T-cell (primary cell): ENCODE measurements at regions of chr2 and their contacts with region 1.

Region 1: DNA sequence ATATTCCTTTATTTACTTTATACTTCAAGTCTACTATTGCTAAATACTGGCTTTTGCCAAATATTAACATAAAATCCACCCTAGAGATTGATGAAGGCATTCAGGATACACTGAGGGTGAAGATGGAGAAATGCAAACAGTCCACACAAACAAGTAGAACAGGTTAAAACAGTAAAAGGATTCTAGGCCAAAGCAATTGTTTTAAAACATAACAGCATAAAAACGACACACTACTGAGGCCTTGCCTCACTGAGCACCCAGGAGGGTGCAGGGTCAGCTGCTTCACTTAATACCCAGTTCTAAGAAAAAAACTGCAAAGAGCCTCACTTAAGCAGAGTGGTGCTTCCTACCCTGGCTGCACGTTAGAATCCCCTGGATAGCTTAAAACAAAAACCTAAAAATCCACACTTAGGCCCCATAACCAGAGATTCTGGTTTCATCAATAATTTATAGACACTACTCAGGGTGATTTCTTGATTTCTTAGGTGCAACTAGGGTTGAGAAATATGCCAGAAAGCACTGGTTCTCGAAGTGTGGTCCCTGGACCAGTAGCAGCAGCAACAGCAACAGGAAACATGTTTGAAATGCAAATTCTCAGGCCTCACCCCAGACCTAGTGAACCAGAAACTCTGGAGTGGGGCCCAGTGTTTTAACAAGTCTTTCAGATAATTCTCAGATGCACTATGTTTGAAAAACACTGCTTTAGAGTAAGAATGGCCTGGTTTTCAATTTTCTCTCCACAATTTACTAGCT is 279.2 kb downstream of the ZEB2 start:
- DNase-seq: no peak
- ATAC-seq: no peak
- H3K4me3 ChIP-seq: no peak overlapping the region
- H3K4me3 Mint-ChIP-seq: no peak overlapping the region
- H3K27ac ChIP-seq: no peak overlapping the region
- H3K27ac Mint-ChIP-seq: no peak overlapping the region
- H3K4me1 ChIP-seq: peaks cover 0 to 15% of the 10 kb centered on the region in 2 experiments
- H3K4me1 Mint-ChIP-seq: peaks cover 24 to 49% (median 36%) of the 10 kb centered on the region in 3 donors
- H3K27me3 ChIP-seq: no peaks in the 10 kb centered on the region
- H3K27me3 Mint-ChIP-seq: no peaks in the 10 kb centered on the region

Region 2: DNA sequence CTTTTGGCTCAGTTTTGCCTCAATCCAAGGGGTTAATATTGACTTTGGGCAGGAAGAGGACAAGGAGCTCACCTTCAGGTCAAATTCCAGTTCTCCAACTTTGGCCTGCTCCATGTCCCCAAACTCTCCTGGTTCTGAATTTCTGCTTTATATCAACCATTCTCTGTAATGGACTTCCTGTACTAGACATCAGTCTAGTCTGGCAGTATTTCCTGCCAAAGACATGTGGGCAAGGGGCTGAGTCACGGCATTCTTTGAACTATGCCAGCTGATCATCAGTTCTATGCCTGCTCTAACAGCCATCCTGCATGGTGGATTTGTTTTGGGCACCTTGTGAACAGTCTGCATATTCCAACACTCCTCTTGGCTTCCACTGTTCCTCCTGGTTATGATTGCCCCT is 79.7 kb after region 1 on chr2:
- CTCF ChIA-PET with region 1: no interaction called
- POLR2A ChIA-PET with region 1: interaction called in 1 of 2 experiments, 10 read pairs
- DNase-seq: peak; percentile 9 to 76 (median 40)
- ATAC-seq: peak; percentile 71 to 97 (median 94)
- H3K4me3 ChIP-seq: no peak overlapping the region
- H3K4me3 Mint-ChIP-seq: no peak overlapping the region
- H3K27ac ChIP-seq: peak overlapping the region; percentile 14
- H3K27ac Mint-ChIP-seq: peak overlapping the region; percentile 11 to 26
- H3K4me1 ChIP-seq: peaks cover 14 to 15% of the 10 kb centered on the region in 2 experiments
- H3K4me1 Mint-ChIP-seq: peaks cover 35 to 45% (median 42%) of the 10 kb centered on the region in 3 donors
- H3K27me3 ChIP-seq: no peaks in the 10 kb centered on the region
- H3K27me3 Mint-ChIP-seq: no peaks in the 10 kb centered on the region

Region 3: GRCh38 chr2:144350151-144350802 is 109.5 kb after region 1 on chr2:
- CTCF ChIA-PET with region 1: interaction called in 1 of 2 experiments, 10 read pairs
- POLR2A ChIA-PET with region 1: no interaction called
- DNase-seq: no peak
- ATAC-seq: no peak
- H3K4me3 ChIP-seq: no peak overlapping the region
- H3K4me3 Mint-ChIP-seq: no peak overlapping the region
- H3K27ac ChIP-seq: no peak overlapping the region
- H3K27ac Mint-ChIP-seq: no peak overlapping the region
- H3K4me1 ChIP-seq: no peaks in the 10 kb centered on the region
- H3K4me1 Mint-ChIP-seq: no peaks in the 10 kb centered on the region
- H3K27me3 ChIP-seq: no peaks in the 10 kb centered on the region
- H3K27me3 Mint-ChIP-seq: no peaks in the 10 kb centered on the region